ENCODE measurements at regions of chr19 and their contacts with region 1.

Region 1: DNA sequence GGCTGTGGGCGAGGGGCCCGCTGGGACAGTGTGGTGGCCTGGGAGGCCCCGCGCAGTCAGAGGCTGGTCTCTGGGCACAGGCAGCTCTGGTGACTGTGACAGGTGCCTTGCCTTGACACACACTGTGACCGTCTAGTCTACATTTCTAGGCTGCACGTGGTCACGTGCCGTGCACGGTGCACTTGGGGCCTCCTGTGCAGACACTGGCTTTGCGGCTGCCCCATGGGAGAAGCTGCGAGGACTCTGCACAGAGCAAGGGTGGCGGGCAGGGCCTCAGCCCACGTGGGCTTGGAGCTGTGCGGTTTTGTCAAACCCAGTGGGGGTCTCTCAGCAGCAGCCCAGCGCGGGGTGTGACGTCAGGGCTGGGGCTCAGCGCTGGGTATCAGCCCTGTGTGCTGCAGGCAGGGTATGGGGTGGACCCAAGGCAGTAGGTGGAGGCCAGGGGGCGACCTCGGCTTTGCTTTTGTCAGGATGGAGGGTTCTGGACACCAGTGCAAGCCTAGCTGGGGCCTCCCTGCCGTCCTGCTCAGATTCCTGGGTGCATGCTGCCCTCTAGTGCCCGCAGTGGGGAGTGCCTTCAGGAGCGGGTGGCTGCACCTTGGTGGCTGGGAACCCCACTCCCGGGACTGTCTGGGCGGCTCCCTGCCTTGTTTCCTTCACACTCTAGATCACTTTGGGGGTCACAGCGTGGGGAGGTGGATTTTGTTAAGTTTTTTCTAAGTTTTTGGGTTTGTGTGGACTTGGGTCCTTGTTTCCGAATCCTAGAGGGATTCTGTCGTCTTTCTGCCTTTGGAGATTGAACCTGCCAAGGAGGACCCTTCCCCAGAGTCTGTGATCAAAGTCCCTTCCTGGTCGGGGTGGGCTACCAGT is 62.6 kb downstream of the KDM4B start:
- DNase-seq: peak; percentile 63 to 81
- ATAC-seq: peak; percentile 92 to 95
- H3K4me3 ChIP-seq: no peak overlapping the region
- H3K27ac ChIP-seq: no peak overlapping the region
- H3K4me1 ChIP-seq: 0 out of 3 replicates have a peak, but pooled peaks cover 5% of the 10 kb centered on the region
- CTCF ChIP-seq: peak; percentile 72
- EP300 ChIP-seq: no peak
- POLR2A ChIP-seq: no peak
- RAD21 ChIP-seq: peak; percentile 89 to 91

Region 2: DNA sequence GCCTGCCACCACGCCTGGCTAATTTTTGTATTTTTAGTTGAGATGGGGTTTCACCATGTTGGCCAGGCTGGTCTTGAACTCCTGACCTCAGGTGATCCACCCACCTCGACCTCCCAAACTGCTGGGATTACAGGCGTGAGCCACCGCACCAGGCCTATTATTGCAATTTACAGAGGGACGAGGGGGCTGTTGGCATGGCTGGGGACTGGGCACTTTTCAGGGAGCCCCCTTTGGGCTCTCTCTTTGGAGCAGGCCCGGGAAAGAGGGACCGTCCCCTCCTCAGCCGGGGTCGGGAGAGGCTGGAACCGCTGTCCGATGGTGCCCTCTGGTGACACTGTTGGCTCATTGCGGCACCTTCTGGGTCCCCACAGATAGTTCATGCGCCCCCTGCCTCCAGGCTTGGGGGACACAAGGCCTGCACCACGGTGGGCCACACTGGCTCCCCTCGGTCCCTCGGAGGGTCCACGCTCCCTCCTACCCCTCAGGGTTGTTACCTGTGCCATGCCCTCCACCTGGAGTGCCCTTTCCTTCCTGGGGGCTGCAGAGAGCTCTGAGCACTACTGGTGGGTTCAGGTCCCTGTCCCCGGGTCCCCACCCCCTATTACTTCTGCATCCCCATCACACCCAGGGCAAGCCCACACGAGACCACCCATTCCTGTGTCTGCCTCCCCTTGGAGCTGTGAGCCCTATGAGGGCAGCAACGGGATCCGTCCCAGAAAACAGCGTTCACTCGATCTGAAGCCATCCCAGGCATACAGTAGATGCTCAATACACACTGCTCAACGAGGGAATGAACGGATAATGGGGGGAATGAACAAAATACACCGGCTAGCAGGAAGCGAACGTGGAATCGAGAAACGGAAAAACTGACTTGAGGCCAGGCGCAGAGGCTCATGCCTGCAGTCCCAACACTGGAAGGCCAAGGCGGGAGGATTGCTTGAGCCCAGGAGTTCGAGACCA is 227.4 kb before region 1 on chr19:
- CTCF ChIA-PET with region 1: interaction called, 143 read pairs
- POLR2A ChIA-PET with region 1: no interaction called
- DNase-seq: peak; percentile 47 to 52
- ATAC-seq: peak; percentile 88 to 93
- H3K4me3 ChIP-seq: no peak overlapping the region
- H3K27ac ChIP-seq: no peak overlapping the region
- H3K4me1 ChIP-seq: no peaks in the 10 kb centered on the region
- CTCF ChIP-seq: peak; percentile 67
- EP300 ChIP-seq: no peak
- POLR2A ChIP-seq: no peak
- RAD21 ChIP-seq: peak; percentile 69 to 80

Region 3: DNA sequence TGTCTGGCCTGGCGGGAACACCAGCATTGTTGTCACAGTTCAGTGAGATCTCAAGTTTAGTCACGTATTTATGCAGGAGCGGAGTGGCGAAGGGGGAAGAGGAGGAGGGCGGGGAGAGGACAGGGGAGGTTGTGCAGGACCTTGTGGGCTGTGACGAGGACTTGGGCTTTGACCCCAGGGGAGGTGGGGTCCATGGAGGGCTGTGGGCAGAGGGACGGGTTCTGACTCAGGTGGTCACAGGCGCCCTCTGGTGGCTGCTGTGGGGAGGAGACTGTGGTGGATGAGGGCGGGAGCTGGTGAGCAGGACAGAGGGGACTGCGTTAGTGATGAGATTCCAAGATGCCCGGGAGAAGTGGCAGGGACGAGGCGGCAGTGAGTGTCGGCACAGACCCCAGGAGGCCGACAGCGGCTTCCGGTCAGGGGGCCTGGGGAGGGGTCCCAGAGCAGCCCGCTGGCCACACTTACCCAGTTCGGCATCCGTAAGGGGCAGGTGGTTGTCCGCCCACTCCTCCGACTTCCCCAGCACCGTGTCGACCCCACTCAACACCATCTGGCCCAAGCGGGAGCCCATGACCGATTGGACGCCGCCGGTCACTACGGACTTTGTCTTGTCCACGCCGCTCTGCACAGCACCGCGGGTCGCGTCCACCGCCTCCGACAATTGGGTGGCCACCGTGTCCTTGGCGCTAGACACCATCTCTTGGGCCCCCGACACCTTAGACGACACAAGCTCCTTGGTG is 179.7 kb before region 1 on chr19:
- CTCF ChIA-PET with region 1: interaction called, 17 read pairs
- POLR2A ChIA-PET with region 1: no interaction called
- DNase-seq: peak; percentile 52 to 63
- ATAC-seq: peak; percentile 93 to 97
- H3K4me3 ChIP-seq: no peak overlapping the region
- H3K27ac ChIP-seq: no peak overlapping the region
- H3K4me1 ChIP-seq: no peaks in the 10 kb centered on the region
- CTCF ChIP-seq: peak; percentile 54
- EP300 ChIP-seq: no peak
- POLR2A ChIP-seq: no peak
- RAD21 ChIP-seq: peak; percentile 64 to 65

Region 4: GRCh38 chr19:4867534-4868285 is 163.8 kb before region 1 on chr19 and contains the start of gene PLIN3:
- CTCF ChIA-PET with region 1: interaction called, 45 read pairs
- POLR2A ChIA-PET with region 1: no interaction called
- DNase-seq: peak; percentile 93 to 96
- ATAC-seq: peak; percentile 84 to 88
- H3K4me3 ChIP-seq: peak within 1 kb of the TSS; percentile 97
- H3K27ac ChIP-seq: peak within 1 kb of the TSS; percentile 90 to 94
- H3K4me1 ChIP-seq: peaks cover 37% of the 10 kb centered on the region
- CTCF ChIP-seq: no peak
- EP300 ChIP-seq: no peak
- POLR2A ChIP-seq: peak; percentile 25; the same call in 1 of the 2 replicates
- RAD21 ChIP-seq: no peak
- polyA plus RNA-seq, gene PLIN3: 28.4 and 30.1 TPM in 2 replicates

Region 5: GRCh38 chr19:4909897-4910593 is 121.4 kb before region 1 on chr19:
- CTCF ChIA-PET with region 1: interaction called, 33 read pairs
- POLR2A ChIA-PET with region 1: interaction called, 3 read pairs
- DNase-seq: peak; percentile 85 to 91
- ATAC-seq: peak; percentile 74 to 78
- H3K4me3 ChIP-seq: peak overlapping the region; percentile 85
- H3K27ac ChIP-seq: peak overlapping the region; percentile 93 to 95
- H3K4me1 ChIP-seq: peaks cover 45% of the 10 kb centered on the region
- CTCF ChIP-seq: no peak
- EP300 ChIP-seq: no peak
- POLR2A ChIP-seq: no peak
- RAD21 ChIP-seq: no peak

Region 6: DNA sequence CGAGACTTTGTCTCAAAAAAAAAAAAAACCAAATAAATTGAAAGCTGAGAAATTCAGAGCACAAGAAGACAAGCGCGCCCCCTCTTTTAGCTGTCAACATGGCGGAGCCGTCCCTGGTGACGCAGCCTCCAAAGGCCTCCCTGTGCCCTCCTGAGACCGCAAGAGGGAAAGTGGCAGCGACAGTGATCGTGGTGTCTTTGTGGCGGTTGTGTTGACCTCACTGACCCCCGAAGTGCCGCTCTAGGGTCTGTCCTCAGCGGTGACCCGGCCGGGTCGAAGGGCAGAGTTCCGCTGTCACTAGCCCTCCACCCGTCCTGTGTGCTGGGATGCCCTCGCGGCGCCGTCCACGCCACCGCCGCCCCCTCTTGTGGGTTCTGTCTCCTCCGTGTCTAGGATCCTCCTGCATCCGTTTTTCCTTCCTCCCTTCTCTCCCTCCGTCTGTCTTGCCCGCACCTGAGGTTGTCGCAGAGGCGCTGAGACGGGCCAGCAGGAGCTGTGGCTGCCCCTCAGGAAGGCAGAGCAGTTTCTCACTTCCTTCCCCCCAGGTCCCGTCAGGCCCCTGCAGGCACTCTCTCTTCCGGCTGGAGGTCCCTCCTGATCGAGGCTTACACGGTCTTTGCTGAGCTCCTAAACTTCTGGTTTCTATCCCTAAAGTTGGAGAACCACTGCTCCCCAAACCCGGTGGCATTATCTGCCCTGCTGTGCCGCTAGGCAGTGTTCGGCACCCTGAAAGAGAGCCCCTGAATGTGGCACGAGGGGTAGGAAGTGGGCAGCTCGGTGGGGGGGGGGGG is 115.0 kb before region 1 on chr19:
- CTCF ChIA-PET with region 1: interaction called, 33 read pairs
- POLR2A ChIA-PET with region 1: no interaction called
- DNase-seq: no peak
- ATAC-seq: no peak
- H3K4me3 ChIP-seq: no peak overlapping the region
- H3K27ac ChIP-seq: peak overlapping the region in 1 of 2 experiments; percentile 95; a peak in 3 of 6 replicates
- H3K4me1 ChIP-seq: peaks cover 37% of the 10 kb centered on the region
- CTCF ChIP-seq: no peak
- EP300 ChIP-seq: no peak
- POLR2A ChIP-seq: no peak
- RAD21 ChIP-seq: no peak

Region 7: GRCh38 chr19:5018224-5019015 is 13.0 kb before region 1 on chr19:
- CTCF ChIA-PET with region 1: interaction called, 41 read pairs
- POLR2A ChIA-PET with region 1: no interaction called
- DNase-seq: no peak
- ATAC-seq: no peak
- H3K4me3 ChIP-seq: no peak overlapping the region
- H3K27ac ChIP-seq: no peak overlapping the region
- H3K4me1 ChIP-seq: no peaks in the 10 kb centered on the region
- CTCF ChIP-seq: no peak
- EP300 ChIP-seq: no peak
- POLR2A ChIP-seq: no peak
- RAD21 ChIP-seq: no peak

Region 8: GRCh38 chr19:5083547-5083965 is 52.1 kb after region 1 on chr19:
- CTCF ChIA-PET with region 1: no interaction called
- POLR2A ChIA-PET with region 1: no interaction called
- DNase-seq: no peak
- ATAC-seq: no peak
- H3K4me3 ChIP-seq: no peak overlapping the region
- H3K27ac ChIP-seq: no peak overlapping the region
- H3K4me1 ChIP-seq: no peaks in the 10 kb centered on the region
- CTCF ChIP-seq: no peak
- EP300 ChIP-seq: no peak
- POLR2A ChIP-seq: no peak
- RAD21 ChIP-seq: no peak

Region 9: DNA sequence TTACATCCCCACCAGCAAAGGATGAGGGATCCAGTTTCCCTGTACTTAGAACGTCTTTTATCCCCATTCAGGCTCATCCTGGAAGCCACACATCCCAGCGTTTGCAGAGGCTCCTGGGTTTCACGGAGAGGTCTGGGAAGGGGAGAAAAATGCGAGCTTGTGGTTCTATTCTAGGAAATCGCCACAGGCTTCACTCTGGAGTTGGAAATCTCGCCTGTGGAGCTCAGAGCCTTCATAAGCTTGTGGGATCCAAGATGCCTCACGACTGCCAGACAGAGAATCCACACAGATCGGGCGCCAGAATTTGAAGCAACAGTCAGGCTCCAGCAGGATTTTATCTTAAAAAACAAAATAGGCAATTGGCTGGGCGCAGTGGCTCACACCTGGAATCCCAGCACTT is 151.3 kb after region 1 on chr19:
- CTCF ChIA-PET with region 1: no interaction called
- POLR2A ChIA-PET with region 1: no interaction called
- DNase-seq: no peak
- ATAC-seq: no peak
- H3K4me3 ChIP-seq: no peak overlapping the region
- H3K27ac ChIP-seq: peak overlapping the region in 1 of 2 experiments; percentile 40; a peak in 1 of 6 replicates
- H3K4me1 ChIP-seq: 0 out of 3 replicates have a peak, but pooled peaks cover 9% of the 10 kb centered on the region
- CTCF ChIP-seq: no peak
- EP300 ChIP-seq: no peak
- POLR2A ChIP-seq: no peak
- RAD21 ChIP-seq: no peak